Heart left ventricle (tissue), 16 donors: ENCODE measurements at regions of chr7 and their contacts with region 1.

Region 1: DNA sequence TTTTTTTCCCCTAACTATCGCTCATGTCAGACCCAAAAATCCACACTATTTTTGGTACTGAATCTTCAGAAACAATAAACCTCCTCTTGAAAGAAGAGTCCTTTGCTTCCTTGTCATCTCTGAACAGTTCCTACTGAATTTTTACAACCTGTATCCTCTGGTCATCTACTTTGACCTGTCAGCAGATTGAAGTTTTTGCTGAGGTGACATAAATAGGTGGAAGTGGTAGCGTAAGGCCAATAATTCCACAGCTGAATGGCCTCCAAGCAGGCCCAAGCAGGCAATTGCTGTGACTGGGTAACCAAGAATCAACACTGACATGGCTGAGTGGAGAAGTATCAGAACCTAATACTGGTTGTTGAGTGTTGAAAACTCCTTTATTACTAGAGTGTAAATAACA is 117.4 kb upstream of the MAGI2 start:
- DNase-seq: no peak
- ATAC-seq: no peak
- H3K4me3 ChIP-seq: no peak overlapping the region
- H3K27ac ChIP-seq: no peak overlapping the region
- H3K4me1 ChIP-seq: no peaks in the 10 kb centered on the region
- H3K27me3 ChIP-seq: no peaks in the 10 kb centered on the region
- CTCF ChIP-seq: no peak
- POLR2A ChIP-seq: no peak

Region 2: GRCh38 chr7:79529896-79530235 is 41.0 kb before region 1 on chr7:
- intact Hi-C with region 1: loop called in 1 of 10 experiments (anchors 2 kb)
- DNase-seq: no peak
- ATAC-seq: no peak
- H3K4me3 ChIP-seq: no peak overlapping the region
- H3K27ac ChIP-seq: no peak overlapping the region
- H3K4me1 ChIP-seq: no peaks in the 10 kb centered on the region
- H3K27me3 ChIP-seq: no peaks in the 10 kb centered on the region
- CTCF ChIP-seq: no peak
- POLR2A ChIP-seq: no peak

Region 3: GRCh38 chr7:79540592-79540991 is 30.3 kb before region 1 on chr7:
- intact Hi-C with region 1: no loop called
- DNase-seq: no peak
- ATAC-seq: no peak
- H3K4me3 ChIP-seq: no peak overlapping the region
- H3K27ac ChIP-seq: no peak overlapping the region
- H3K4me1 ChIP-seq: no peaks in the 10 kb centered on the region
- H3K27me3 ChIP-seq: no peaks in the 10 kb centered on the region
- CTCF ChIP-seq: no peak
- POLR2A ChIP-seq: no peak

Region 4: DNA sequence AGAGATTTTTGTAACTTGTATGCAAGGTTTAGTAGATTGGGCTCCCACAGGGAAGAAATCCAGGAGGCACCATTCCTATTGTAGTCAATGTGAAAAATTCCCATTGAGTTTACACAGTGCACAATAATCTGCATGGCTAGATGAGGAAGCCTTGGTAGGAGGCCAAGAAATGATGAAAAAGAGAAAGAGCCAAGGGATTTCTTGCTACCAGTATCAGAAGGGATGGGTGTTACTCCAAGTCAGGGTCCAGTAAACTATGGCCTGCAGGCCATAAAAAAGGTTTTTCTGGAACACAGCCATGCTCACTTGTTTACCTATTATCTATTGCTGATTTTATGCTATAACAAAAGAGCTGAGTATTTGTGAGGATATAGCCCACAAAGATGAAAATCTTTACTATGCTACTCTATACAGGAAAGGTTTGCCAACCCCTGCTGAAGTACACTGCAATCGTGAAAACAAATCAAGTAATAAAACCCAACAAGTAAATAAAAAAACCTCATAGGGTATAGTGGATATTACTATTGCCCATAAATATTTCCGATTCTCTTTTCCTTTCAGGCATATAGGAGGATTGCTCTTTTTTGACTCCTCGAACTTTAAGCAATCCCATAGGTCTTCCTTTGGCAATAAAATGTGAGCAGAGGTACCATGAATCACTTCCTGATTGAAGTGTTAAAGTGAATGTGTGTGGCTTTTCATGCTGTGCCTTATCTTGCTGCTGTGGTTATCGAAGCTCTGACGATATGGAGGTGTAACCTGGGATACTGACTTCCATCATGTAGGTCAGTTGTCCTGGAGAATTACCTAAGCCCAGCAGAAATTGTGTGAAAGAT is 138.9 kb after region 1 on chr7:
- intact Hi-C with region 1: no loop called
- DNase-seq: no peak
- ATAC-seq: no peak
- H3K4me3 ChIP-seq: no peak overlapping the region
- H3K27ac ChIP-seq: no peak overlapping the region
- H3K4me1 ChIP-seq: no peaks in the 10 kb centered on the region
- H3K27me3 ChIP-seq: no peaks in the 10 kb centered on the region
- CTCF ChIP-seq: no peak
- POLR2A ChIP-seq: no peak